Spleen (tissue), 13 donors: ENCODE measurements at regions of chr13 and their contacts with region 1.

Region 1: DNA sequence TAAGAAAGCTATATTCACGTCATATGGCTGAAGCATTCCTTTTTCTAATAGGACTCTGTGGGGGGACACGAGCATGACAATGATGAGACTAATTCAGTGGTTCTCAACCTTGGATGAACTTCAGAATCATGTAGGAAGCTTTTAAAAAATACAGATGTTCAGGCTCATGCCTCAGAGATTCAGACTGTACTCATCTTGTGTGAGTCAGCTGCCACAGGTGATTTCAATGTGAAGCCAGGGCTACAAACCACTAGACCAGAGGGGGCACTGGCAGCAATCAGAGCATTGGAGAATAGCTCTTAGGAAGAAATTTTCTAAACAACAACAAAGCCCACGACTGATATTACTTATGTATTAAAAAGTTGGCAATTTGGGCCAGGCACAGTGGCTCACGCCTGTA is 91.7 kb downstream of the SERP2 start:
- DNase-seq: no peak
- H3K4me3 ChIP-seq: no peak overlapping the region
- H3K27ac ChIP-seq: no peak overlapping the region
- H3K4me1 ChIP-seq: no peaks in the 10 kb centered on the region
- H3K27me3 ChIP-seq: no peaks in the 10 kb centered on the region
- CTCF ChIP-seq: no peak
- POLR2A ChIP-seq: no peak

Region 2: DNA sequence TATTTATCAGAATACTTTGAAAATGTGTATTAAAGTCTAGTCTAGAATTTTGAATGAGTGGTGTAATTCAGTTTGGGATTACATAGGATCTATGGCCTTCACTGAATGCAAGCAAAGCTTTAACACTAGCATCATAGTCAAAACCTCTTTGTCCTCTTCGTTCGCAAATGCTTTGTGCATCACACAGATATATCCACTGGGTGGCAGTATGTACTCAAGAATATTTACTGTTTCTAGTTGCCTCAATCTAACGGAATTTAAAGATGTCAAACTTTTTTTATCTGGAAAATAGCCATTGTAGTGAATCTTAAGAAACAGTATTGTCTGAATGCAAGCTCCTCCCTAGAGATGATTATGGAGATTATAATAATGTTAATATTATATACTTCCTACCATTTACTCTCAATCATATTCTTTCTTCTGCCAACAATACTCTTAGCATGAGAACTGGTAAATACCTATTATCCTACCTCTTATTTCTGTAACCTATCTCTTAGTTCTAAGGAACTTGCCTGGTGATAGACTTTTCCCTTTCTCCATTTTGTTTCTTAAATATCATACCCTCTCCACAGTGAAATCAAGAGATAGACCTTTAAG is 559.8 kb before region 1 on chr13:
- intact Hi-C with region 1: loop called (anchors 5 kb)
- DNase-seq: no peak
- H3K4me3 ChIP-seq: no peak overlapping the region
- H3K27ac ChIP-seq: no peak overlapping the region
- H3K4me1 ChIP-seq: peaks cover 0 to 7% (median 1%) of the 10 kb centered on the region in 6 donors
- H3K27me3 ChIP-seq: peaks cover 0 to 6% (median 0%) of the 10 kb centered on the region in 7 donors
- CTCF ChIP-seq: peak; percentile 78 to 89 (median 85)
- POLR2A ChIP-seq: no peak

Region 3: GRCh38 chr13:44770951-44771350 is 305.6 kb after region 1 on chr13:
- intact Hi-C with region 1: no loop called
- DNase-seq: no peak
- H3K4me3 ChIP-seq: no peak overlapping the region
- H3K27ac ChIP-seq: no peak overlapping the region
- H3K4me1 ChIP-seq: peaks cover 0 to 21% (median 4%) of the 10 kb centered on the region in 6 donors
- H3K27me3 ChIP-seq: no peaks in the 10 kb centered on the region
- CTCF ChIP-seq: no peak
- POLR2A ChIP-seq: no peak